Activated CD4-positive, alpha-beta T cell treated with anti-CD3 and anti-CD28 coated beads for 36 hours (primary cell): ENCODE measurements at regions of chr5 and their contacts with region 1.

Region 1: DNA sequence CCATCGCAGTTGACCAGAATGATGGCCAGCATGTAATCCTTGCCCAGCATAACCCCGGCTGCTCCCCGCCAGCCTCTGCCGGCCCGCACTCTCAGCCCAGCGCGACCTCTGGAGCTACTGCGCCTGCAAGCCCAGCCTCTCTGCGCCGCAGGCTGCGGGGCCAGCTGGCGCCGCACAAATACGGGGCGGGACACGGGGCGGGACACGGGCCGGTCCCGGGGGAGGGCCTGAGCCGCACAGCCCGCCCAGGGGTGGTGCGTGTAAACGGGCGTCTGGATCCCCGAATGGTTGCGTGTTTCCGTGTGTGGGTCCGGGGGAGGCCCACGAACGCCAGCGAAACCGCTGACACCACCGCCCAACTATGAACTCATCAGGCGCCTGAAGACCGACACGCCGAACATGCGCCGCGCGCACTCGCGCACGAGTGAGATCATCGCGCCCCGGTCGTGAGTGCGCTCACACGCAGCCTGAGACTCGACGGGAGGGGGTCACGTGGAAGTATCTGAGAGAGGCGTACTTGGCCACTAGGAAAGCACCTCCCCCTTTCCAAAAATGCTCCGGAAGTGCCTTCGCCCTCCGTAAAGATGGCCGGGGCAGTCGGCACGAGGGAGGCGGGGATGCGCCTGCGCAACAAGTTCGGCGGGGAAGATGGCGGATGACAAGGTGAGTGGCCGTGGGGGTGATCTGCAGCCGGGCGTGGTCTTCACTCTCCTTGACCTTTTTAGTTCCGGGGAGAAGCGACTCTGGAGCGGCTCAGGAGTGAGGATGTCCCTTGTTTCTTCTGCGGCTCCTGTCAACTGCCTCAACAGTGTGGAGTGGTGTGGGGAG is at the starts of genes APBB3 and SLC35A4:
- DNase-seq: peak; percentile 96
- ATAC-seq: peak; percentile 95
- H3K4me3 Mint-ChIP-seq: peak within 1 kb of the TSS; percentile 98
- H3K27ac Mint-ChIP-seq: peak within 1 kb of the TSS; percentile 99
- H3K4me1 Mint-ChIP-seq: peaks cover 49% of the 10 kb centered on the region
- H3K27me3 Mint-ChIP-seq: no peaks in the 10 kb centered on the region
- total RNA-seq, gene APBB3: 12.8 to 19.0 TPM
- total RNA-seq, gene SLC35A4: 61.8 to 65.4 TPM

Region 2: GRCh38 chr5:140157032-140157803 is 407.2 kb before region 1 on chr5:
- CTCF ChIA-PET with region 1: no interaction called
- POLR2A ChIA-PET with region 1: no interaction called
- intact Hi-C with region 1: no loop called
- DNase-seq: peak; percentile 94
- ATAC-seq: peak; percentile 99
- H3K4me3 Mint-ChIP-seq: peak overlapping the region; percentile 22
- H3K27ac Mint-ChIP-seq: peak overlapping the region; percentile 49
- H3K4me1 Mint-ChIP-seq: peaks cover 5% of the 10 kb centered on the region
- H3K27me3 Mint-ChIP-seq: no peaks in the 10 kb centered on the region

Region 3: DNA sequence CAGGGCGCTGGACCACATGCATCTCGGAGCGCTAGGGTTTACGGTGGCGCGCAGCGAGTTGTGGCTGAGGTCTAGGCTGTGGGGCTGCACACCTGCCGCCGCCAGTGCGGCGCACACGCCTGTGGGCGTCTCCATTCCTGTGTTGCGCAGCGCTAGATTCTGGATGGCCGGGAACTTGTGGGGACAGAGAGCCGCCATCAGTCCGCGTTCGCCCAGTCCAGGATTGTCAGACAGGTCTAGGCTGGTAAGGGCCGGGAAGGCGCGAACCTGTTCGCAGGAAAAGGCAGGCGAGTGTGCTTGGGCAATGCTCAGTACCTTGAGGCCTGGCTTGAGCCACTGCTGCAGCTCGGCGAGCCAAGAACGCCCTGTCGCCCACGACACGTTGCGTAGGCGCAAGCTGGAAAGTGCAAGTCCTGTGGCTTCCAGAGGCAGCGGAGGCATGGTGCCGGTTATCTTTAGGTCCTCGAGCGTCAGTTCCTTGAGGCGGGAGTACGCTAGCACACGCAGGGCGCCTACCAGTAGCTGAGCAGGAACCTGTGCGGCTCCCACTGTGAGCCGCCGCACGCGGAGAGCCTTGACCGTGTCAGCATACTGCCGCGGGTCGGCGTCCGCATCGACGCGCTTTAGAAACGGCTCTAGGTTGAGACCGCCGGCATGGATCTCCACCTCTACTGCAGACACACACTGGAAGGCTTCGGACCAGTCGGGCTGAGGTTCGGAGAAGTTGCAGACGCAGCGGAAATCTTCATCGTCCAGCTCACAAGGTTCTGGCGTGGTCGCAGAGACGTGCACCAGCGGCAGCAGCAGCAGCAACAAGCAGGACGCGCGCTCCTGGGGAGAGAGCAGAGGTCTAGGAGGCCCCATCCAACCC is 68.0 kb after region 1 on chr5:
- CTCF ChIA-PET with region 1: interaction called, 7 read pairs
- POLR2A ChIA-PET with region 1: interaction called, 4 read pairs
- intact Hi-C with region 1: loop called in 1 of 2 experiments (anchors 1 kb)
- DNase-seq: peak; percentile 69
- ATAC-seq: peak; percentile 67
- H3K4me3 Mint-ChIP-seq: peak overlapping the region; percentile 74
- H3K27ac Mint-ChIP-seq: peak overlapping the region; percentile 73
- H3K4me1 Mint-ChIP-seq: peaks cover 31% of the 10 kb centered on the region
- H3K27me3 Mint-ChIP-seq: peaks cover 14% of the 10 kb centered on the region

Region 4: DNA sequence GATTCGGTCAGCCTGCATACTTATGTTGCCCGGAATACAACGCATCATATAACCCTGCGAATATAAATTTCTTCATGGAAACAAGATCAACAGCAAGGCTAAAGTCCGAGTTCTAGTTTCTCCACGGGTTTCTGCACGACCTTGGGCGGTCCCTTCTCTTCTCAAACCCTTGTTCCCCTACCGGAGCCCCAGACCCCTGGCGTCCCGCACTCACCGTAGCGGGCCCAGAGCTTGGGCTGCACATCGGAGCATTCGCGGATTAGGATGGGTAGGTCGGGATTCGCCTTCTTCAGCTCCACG is 82.6 kb after region 1 on chr5:
- CTCF ChIA-PET with region 1: interaction called, 3 read pairs
- POLR2A ChIA-PET with region 1: interaction called, 3 read pairs
- intact Hi-C with region 1: loop called in 1 of 2 experiments (anchors 1 kb)
- DNase-seq: no peak
- ATAC-seq: peak; percentile 14
- H3K4me3 Mint-ChIP-seq: peak overlapping the region; percentile 97
- H3K27ac Mint-ChIP-seq: peak overlapping the region; percentile 98
- H3K4me1 Mint-ChIP-seq: peaks cover 27% of the 10 kb centered on the region
- H3K27me3 Mint-ChIP-seq: no peaks in the 10 kb centered on the region

Region 5: GRCh38 chr5:140690941-140691924 is 126.8 kb after region 1 on chr5 and contains the starts of genes HARS1 and HARS2:
- CTCF ChIA-PET with region 1: interaction called, 5 read pairs
- POLR2A ChIA-PET with region 1: no interaction called
- intact Hi-C with region 1: loop called in 1 of 2 experiments (anchors 1 kb)
- DNase-seq: peak; percentile 91
- ATAC-seq: peak; percentile 95
- H3K4me3 Mint-ChIP-seq: peak within 1 kb of the TSS; percentile 97
- H3K27ac Mint-ChIP-seq: peak within 1 kb of the TSS; percentile 98
- H3K4me1 Mint-ChIP-seq: peaks cover 41% of the 10 kb centered on the region
- H3K27me3 Mint-ChIP-seq: no peaks in the 10 kb centered on the region
- total RNA-seq, gene HARS1: 83.3 to 91.0 TPM
- total RNA-seq, gene HARS2: 20.9 to 28.1 TPM